ENCODE measurements at regions of chr11 and their contacts with region 1.

Region 1: GRCh38 chr11:95705485-95706124 is 84.0 kb downstream of the FAM76B start:
- DNase-seq: peak; percentile 62 to 88
- H3K4me3 ChIP-seq: no peak overlapping the region
- H3K27ac ChIP-seq: no peak overlapping the region
- H3K4me1 ChIP-seq: 0 out of 7 replicates have a peak, but pooled peaks cover 0 to 2% (median 0%) of the 10 kb centered on the region in 4 experiments
- H3K27me3 ChIP-seq: peaks cover 0 to 1% (median 0%) of the 10 kb centered on the region in 4 experiments; a peak in 1 of 7 replicates
- CTCF ChIP-seq: peak; percentile 78 to 92 (median 90)
- EP300 ChIP-seq: no peak
- POLR2A ChIP-seq: no peak
- RAD21 ChIP-seq: peak; percentile 99

Region 2: DNA sequence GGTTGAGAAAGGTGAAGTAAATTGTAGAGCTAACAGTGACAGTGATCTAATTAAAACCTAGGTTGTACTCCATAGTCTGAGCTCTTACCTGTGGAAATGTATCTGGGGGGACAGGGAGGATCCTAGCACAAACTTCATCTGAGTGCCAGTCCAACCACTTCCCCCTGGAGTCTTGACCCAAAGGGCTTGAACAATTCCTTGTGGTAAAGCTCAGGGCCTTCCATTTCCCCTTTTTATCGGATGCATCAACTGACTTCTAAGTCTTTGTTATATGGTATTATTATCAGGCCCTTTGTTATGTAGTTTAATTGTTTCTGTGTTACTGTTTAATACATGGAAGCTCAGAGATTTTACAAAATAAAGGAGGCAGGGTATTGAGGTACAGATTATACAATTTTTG is 334.5 kb before region 1 on chr11:
- CTCF ChIA-PET with region 1: interaction called, 17 read pairs
- POLR2A ChIA-PET with region 1: no interaction called
- DNase-seq: no peak
- H3K4me3 ChIP-seq: no peak overlapping the region
- H3K27ac ChIP-seq: no peak overlapping the region
- H3K4me1 ChIP-seq: peaks cover 0 to 4% (median 1%) of the 10 kb centered on the region in 4 experiments; a peak in 2 of 7 replicates
- H3K27me3 ChIP-seq: no peaks in the 10 kb centered on the region
- CTCF ChIP-seq: no peak
- EP300 ChIP-seq: no peak
- POLR2A ChIP-seq: no peak
- RAD21 ChIP-seq: no peak

Region 3: GRCh38 chr11:95563173-95563572 is 142.4 kb before region 1 on chr11:
- CTCF ChIA-PET with region 1: interaction called, 14 read pairs
- POLR2A ChIA-PET with region 1: no interaction called
- DNase-seq: no peak
- H3K4me3 ChIP-seq: no peak overlapping the region
- H3K27ac ChIP-seq: no peak overlapping the region
- H3K4me1 ChIP-seq: no peaks in the 10 kb centered on the region; a peak in 1 of 7 replicates
- H3K27me3 ChIP-seq: no peaks in the 10 kb centered on the region
- CTCF ChIP-seq: no peak
- EP300 ChIP-seq: no peak
- POLR2A ChIP-seq: no peak
- RAD21 ChIP-seq: no peak

Region 4: DNA sequence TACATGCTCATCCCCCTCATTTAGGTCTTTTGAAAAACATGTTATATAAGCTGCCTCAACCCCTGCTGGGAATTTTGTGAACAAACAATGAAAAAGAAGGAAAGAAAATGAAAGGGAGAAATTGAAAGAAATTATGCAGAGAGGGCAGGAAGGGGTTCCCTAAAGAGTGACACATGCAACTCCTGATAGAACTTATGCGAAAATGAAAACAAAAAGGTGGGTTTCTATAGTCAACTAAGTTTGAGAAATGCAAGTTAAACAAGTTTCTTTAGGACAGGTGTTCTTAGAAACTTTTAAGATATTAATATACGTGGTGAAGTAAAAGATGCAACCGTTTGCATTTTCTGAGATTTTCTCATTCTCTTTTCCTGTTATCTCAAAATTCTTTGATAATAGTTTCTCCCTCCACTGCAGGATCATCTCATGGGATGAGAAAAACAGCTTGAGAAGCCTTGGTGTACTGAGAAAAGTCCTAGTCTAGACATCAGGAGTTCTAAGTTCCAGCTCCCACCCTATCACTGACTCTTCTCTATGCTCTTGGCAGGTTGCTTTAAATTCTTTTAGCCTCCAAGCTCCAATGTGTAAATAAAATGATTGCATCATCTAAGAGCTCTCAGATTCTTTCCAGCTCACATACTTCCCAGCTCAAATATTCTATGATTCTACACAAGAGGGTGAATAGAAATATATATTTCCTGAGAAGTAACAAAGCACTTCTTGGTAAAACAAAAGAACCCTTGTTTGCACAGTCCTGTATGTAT is 25.3 kb before region 1 on chr11:
- CTCF ChIA-PET with region 1: interaction called, 21 read pairs
- POLR2A ChIA-PET with region 1: no interaction called
- DNase-seq: no peak
- H3K4me3 ChIP-seq: no peak overlapping the region
- H3K27ac ChIP-seq: no peak overlapping the region
- H3K4me1 ChIP-seq: peaks cover 0 to 2% (median 0%) of the 10 kb centered on the region in 4 experiments; a peak in 1 of 7 replicates
- H3K27me3 ChIP-seq: no peaks in the 10 kb centered on the region
- CTCF ChIP-seq: no peak
- EP300 ChIP-seq: no peak
- POLR2A ChIP-seq: no peak
- RAD21 ChIP-seq: no peak

Region 5: GRCh38 chr11:95739108-95739938 is 33.7 kb after region 1 on chr11:
- CTCF ChIA-PET with region 1: interaction called, 15 read pairs
- POLR2A ChIA-PET with region 1: no interaction called
- DNase-seq: no peak
- H3K4me3 ChIP-seq: no peak overlapping the region
- H3K27ac ChIP-seq: no peak overlapping the region
- H3K4me1 ChIP-seq: no peaks in the 10 kb centered on the region
- H3K27me3 ChIP-seq: no peaks in the 10 kb centered on the region
- CTCF ChIP-seq: peak; percentile 25 to 45 (median 28); a peak in 3 of 4 replicates
- EP300 ChIP-seq: no peak
- POLR2A ChIP-seq: no peak
- RAD21 ChIP-seq: peak; percentile 37 to 46; a peak in 3 of 4 replicates

Region 6: DNA sequence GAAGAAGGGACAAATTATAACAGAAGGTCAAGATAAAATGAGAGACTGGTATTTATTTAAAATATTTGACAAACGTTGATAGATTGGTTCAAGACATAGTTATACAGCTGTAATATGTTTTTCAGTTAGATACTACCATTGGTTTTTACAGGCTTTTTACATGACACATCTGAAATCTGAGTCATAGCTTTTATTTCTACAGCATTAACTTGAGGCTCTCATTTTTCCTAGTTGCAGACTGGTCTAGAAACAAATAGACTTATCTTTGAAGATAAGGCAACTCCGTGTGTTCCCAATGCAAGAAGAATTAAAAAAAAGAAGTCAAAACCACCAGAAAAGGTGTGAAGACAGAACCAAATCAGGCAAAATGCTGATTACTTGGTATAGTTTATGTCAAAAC is 116.0 kb after region 1 on chr11:
- CTCF ChIA-PET with region 1: no interaction called
- POLR2A ChIA-PET with region 1: no interaction called
- DNase-seq: no peak
- H3K4me3 ChIP-seq: no peak overlapping the region
- H3K27ac ChIP-seq: no peak overlapping the region
- H3K4me1 ChIP-seq: no peaks in the 10 kb centered on the region
- H3K27me3 ChIP-seq: no peaks in the 10 kb centered on the region
- CTCF ChIP-seq: no peak
- EP300 ChIP-seq: no peak
- POLR2A ChIP-seq: no peak
- RAD21 ChIP-seq: no peak

Measured in H1 (cell line).